Right ventricle myocardium inferior (tissue), 1 donor: ENCODE measurements at regions of chr3 and their contacts with region 1.

Region 1: GRCh38 chr3:14467814-14468620 is 65.6 kb downstream of the SLC6A6 start:
- DNase-seq: no peak
- ATAC-seq: peak; percentile 59

Region 2: DNA sequence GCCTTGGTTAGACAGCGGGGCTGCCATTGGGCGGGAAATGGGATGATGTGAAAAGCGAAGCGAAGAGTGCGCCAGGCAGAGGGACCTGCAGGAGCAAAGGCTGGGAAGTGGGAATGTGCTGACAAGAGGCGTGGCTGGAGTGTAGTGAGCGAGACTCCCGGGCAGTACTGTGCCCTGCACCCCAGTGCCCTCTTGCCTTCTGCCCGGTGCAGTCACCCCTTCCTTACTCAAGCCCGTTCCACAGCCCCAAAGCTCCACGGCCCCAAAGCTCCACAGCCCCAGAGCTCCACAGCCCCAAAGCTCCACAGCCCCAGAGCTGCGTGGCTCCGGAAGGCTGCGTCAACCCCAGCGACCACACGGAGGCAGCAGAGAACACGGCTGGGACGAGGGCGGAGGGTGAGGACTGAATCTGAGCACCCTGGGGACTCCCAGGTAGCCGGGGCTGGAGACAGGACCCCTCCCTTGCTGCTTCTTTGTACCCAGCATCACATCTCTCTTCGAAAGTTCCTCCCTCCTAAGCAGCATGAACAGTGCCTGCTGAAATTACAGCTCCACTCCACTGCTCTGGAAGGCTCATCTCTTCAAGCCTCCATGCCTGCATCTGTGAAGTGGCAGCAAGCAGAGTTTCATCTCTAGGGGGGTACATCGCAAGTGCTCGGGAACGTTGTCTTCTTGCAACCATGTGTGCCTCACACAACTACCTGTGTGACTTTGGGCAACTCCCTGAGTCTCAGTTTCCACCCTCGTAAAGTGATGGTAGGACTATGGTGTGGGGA is 810.2 kb before region 1 on chr3:
- intact Hi-C with region 1: loop called (anchors 5 kb)
- DNase-seq: peak; percentile 76
- ATAC-seq: peak; percentile 61

Region 3: DNA sequence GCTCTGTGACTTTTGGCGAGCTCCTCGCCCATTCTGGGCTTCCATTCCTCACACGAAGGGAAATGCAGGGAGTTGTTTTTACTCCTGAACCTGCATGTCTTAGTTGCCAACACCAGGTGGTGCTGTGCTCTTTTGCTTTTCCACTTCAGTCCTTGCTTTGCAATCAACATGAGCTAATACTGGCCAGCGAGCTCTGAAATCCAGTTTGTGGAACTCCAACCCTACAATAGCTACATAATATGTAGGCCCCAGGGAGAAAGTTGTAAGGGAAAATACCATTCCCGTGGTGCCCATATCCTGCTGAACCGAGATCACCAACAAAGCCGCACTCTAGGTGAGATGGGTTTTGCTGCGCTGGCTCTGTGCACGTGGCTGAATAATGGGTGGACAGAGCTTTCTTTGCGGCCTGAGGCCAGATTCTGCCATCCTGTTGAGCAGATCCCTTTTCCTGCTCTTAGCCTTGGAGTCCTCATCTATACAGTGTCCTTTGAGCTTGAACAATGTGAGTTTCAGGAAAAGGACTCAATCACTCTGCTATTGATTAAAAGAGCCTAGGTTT is 264.4 kb before region 1 on chr3:
- intact Hi-C with region 1: loop called (anchors 1 kb)
- DNase-seq: no peak
- ATAC-seq: peak; percentile 72